ENCODE measurements at regions of chr2 and their contacts with region 1.

Region 1: DNA sequence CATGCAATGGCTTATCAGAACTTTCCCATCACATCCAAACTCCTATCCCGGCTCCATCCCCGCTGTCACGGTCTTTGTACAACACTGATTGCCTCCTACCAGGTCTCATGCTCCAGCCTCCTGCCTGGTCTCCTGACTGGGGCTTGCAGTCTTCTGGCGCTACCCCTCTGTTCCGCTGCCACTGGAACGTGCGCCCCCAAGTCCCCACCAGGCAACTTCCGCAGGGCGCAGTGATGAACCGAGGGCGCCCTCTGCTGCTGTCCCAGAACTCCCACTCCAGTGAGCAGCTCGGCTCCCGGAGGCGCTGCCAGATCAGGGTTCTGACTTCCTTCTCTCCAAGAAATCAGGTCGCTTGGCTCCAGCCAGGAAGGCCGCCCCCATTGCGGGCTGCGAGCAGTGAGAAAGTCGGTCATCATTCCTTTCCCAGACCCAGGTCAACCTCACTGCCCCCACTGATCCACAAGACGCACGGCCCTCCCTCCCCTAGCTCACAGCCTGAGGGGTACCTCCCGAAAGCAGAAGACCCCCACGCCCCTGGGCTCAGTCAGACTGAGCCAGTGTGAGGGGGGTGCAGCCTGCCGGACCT is 43.9 kb upstream of the RAB11FIP5 start:
- DNase-seq: peak; percentile 44 to 71
- H3K4me3 ChIP-seq: no peak overlapping the region
- H3K27ac ChIP-seq: no peak overlapping the region
- H3K4me1 ChIP-seq: peaks cover 0 to 8% (median 7%) of the 10 kb centered on the region in 4 donors
- H3K27me3 ChIP-seq: peaks cover 0 to 23% of the 10 kb centered on the region in 2 donors
- CTCF ChIP-seq: peak; percentile 60 to 78

Region 2: DNA sequence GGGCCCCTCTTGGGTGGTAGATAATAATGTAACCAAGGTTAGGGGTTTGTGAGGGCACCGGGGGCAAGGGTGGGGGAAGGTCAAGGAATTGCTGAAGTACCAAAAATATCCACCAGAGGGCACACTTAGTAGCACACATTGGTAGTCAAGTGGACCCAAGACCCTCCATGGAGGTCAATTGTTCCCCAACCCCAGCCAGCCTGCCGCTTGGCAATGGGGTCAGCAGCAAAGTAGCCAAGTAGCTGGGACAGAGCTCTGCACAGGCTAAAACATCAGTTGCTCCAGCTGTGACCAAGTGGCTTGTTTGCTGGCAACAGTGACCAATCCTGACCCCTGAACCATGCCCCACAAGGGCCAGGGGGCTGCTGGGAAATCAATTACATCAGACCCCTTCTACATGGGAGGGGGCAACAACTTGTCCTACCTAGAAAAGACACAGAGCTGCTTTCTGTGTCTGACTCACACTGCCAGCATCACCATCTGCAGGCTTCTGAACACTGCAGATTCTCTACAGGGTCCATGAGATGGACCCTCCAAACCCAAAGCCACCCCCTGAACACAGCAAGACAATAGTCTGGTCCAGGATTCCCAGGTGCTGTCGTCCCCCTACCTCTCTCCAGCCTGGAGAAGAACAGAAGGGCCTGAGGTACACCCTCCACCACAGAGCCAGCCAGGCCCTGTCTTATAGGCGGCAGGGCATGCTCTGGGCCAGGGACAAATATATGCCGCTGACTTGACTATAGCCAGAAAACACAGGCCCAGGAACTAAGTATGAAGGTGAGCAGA is 163.3 kb before region 1 on chr2:
- intact Hi-C with region 1: loop called (anchors 5 kb)
- DNase-seq: peak in 1 of 2 donors; percentile 58
- H3K4me3 ChIP-seq: no peak overlapping the region
- H3K27ac ChIP-seq: no peak overlapping the region
- H3K4me1 ChIP-seq: peaks cover 0 to 10% (median 6%) of the 10 kb centered on the region in 4 donors
- H3K27me3 ChIP-seq: no peaks in the 10 kb centered on the region
- CTCF ChIP-seq: peak; percentile 75 to 85

Region 3: DNA sequence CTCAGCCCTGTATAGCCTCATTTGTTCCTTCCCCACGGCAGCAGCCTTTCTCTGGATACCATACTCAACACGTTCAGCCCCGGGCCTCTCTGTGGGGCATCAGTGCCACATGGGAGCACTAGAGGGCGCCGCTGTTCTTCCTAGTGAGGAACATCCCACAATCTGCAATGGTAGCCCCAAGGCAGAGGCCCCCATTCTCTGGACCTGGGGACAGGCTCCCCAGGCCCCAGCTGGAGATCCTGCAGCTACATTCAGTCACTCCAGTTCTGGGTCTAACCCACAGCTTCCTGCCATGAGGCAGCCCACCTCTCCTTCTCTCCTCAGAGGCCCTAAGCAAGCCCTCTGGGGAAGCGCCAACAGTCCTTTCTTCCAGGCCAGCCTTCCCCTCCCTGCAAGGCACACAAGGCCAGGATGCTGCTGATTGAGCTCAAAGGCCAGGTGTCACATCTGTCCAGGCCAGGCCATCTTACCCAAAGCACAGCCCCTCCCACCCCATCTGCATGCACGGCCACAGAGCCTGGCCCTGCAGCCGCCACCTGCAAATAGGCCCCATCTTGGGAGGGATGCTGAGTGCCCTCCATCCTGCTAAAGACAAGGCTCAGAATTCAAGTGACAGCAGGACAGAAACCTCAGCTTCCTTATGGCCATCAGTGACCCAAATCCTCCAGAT is 70.8 kb before region 1 on chr2:
- intact Hi-C with region 1: loop called (anchors 2 kb)
- DNase-seq: peak; percentile 89
- H3K4me3 ChIP-seq: no peak overlapping the region
- H3K27ac ChIP-seq: no peak overlapping the region
- H3K4me1 ChIP-seq: peaks cover 0 to 67% (median 56%) of the 10 kb centered on the region in 4 donors
- H3K27me3 ChIP-seq: no peaks in the 10 kb centered on the region
- CTCF ChIP-seq: peak; percentile 87 to 95

Measured in tibial artery (tissue), 4 donors.